Activated B cell treated with CpG ODN at 0.5 μM for 24 hours (primary cell): ENCODE measurements at regions of chr1 and their contacts with region 1.

Region 1: DNA sequence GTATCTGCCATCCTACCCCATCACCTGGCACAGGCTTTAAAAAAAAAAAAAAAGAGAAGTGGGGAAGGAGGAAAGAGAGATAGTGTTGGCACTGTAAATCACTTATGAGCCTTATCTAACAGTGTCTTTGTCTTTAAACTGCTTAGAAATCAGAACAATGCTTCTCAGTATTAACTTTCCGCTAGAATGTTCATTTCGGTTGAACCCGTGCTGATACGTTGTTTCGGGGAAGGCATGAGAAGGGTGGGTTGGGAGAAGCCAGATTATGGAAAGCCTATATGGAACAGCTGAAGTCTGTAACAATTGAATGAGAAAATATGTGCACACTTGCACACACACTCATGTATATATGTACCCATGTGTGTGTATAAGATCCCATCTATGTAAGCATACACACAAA is 170.8 kb downstream of the GALNT2 start:
- DNase-seq: no peak
- ATAC-seq: no peak
- H3K4me3 Mint-ChIP-seq: no peak overlapping the region
- H3K27ac Mint-ChIP-seq: no peak overlapping the region
- H3K4me1 Mint-ChIP-seq: peaks cover 16% of the 10 kb centered on the region
- H3K27me3 Mint-ChIP-seq: no peaks in the 10 kb centered on the region
- CTCF ChIP-seq: no peak

Region 2: GRCh38 chr1:230224101-230224960 is 13.5 kb before region 1 on chr1:
- CTCF ChIA-PET with region 1: no interaction called
- POLR2A ChIA-PET with region 1: interaction called, 3 read pairs
- intact Hi-C with region 1: loop called (anchors 2 kb)
- DNase-seq: no peak
- ATAC-seq: no peak
- H3K4me3 Mint-ChIP-seq: no peak overlapping the region
- H3K27ac Mint-ChIP-seq: no peak overlapping the region
- H3K4me1 Mint-ChIP-seq: peaks cover 31% of the 10 kb centered on the region
- H3K27me3 Mint-ChIP-seq: no peaks in the 10 kb centered on the region
- CTCF ChIP-seq: no peak